Head of caudate nucleus (tissue), 42 donors: ENCODE measurements at regions of chr6 and their contacts with region 1.

Region 1: DNA sequence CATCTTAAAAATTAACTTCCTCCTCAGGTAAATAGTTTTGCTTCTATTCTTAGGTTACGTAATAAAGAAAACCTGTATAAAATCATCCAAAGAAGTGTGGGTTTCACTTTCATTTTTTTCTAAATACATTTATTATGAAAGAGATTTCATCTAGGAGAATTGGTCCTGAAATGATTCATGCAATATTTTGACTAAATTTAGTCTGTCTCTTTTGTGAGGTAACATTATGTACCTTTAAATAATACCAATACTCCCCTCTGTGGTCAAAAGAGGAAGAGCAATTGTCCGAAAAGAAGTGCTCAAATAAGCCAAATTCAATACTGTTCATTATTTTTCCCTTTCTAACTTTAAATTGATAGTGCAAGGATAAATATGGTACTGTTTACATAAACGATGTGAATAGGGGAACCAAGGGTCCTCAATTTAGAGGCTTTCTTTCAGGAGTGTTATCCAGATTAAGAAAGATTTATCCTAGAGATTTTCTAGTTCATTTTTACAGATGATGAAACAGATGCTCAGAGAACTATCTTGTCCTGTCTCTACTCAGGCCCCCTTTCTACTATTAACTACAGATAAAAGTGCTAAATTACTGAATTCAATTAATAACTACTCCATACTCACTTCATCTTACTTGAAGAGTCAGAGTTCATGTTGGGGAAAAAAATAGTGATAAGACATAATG is 26.2 kb downstream of the CYP39A1 start:
- DNase-seq: peak in 5 of 42 donors; percentile 9 to 35 (median 16)

Region 2: DNA sequence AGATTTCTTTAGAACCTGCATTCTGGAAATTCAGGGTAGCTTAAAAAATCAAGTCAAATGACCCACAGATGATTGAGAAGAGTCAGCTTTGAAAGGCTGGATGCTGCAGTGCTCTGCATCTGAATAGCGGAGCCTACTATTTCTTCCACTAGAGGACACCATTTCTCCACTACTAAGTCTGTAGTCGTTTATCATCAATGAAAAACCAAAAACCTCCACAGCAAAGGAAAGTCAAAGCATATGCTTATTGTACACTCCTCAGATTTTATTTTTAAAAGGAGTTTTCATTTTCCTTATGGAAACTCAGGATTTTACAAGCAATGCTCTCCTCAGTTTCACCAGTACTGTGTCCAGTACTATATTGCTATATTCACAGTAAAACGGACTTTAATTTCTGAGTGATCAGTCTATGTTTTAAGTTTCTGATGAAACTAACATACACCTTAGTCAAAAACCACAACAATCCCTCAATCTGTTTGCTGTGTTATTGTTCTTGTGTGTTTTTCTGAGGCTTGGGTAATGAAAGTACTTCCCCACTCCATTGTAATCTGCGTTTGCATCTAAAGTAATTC is 405.1 kb before region 1 on chr6:
- intact Hi-C with region 1: loop called (anchors 10 kb)
- DNase-seq: peak in 11 of 42 donors; percentile 21 to 75 (median 41)

Region 3: DNA sequence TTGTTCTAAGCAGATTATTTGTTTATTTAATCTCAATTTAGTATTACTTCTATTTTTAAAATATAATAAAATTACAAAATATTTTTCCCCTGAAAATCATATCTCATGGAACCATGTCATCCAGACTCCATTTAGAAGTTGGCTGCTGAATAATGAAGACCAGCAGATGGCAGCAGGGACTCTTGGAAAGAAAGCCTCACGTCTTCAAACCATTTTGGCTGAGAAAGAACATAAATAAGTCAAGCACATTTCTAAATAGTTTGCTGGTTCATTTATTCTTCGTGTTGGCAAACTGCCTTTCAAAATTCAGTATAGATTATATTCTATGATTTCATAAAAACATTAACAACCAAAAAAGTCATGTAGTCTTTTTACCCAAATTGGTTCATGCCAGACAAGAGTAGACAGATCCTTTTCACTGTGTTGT is 206.8 kb before region 1 on chr6:
- intact Hi-C with region 1: loop called (anchors 5 kb)
- DNase-seq: peak in 40 of 42 donors; percentile 29 to 91 (median 76)

Region 4: DNA sequence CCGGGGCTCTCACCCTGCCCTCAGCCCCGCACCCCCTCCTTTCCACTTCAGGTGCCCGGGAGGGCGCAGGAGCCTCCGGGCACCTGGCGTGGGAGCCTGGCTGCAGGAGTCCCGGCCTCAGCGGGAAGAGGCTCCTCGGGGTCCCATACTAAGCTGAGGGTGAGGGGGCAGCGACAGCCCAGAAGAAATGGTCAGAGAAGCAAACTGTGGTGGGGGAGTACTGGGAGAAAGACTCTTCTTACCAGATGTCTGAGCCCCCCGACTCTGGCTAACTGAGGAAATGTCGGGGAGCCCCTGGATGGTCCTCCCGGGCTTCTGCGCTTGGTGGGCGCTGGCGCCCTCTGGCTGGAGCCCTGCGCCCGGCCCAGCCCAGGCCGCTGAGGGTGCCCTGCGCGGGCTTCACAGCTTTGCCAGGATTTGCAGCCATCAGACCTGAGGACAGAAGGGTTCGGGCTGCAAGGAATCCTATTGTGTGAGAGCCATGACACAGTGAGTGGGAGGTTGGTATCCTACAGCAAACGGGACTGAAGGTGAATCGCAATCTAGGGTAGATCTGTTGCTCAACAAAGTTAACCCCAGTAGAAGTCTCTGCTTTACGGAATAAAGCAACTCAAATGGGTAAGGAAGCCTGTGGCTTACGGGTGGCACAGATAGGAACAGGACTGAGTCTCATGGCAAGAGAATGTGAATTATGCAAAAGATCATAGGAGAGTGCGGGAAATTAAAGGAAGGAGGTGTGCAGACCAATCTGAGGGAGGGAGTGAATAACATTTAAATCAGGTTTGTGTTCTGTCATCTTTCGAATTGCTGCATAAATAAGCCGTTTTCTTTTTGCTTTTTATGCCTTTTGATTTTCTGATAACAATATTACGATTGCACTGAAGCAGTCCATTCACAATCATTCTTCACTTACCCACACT is 134.5 kb before region 1 on chr6:
- intact Hi-C with region 1: loop called (anchors 5 kb)
- DNase-seq: peak; percentile 63 to 91 (median 81)

Region 5: DNA sequence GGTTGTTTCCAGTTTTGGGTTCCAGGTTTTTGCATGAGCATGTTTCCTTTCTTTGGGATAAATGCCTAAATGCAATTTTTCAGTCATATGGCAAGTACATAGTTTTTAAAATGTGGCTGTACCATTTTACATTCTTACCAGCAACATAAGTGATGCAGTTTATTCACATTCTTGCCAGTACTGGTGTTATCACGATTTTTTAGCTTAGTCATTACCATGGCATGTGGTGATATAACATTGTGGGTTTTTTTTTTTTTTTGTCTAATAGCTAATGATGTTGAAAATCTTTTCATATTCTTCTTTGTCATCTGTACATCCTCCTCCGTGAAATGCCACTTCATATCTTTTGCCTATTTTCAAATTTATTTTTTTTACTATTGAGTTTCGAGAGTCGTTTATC is 58.4 kb after region 1 on chr6:
- intact Hi-C with region 1: no loop called
- DNase-seq: no peak